Dorsolateral prefrontal cortex (tissue), 120 donors: ENCODE measurements at regions of chr19 and their contacts with region 1.

Region 1: GRCh38 chr19:12766051-12766521 is 9.3 kb downstream of the HOOK2 start:
- DNase-seq: peak in 9 of 10 donors; percentile 51 to 89 (median 71)
- H3K4me3 ChIP-seq: peak overlapping the region in 50 of 59 donors; percentile 4 to 71 (median 51)
- H3K27ac ChIP-seq: peak overlapping the region in 28 of 59 donors; percentile 20 to 81 (median 54)
- H3K27me3 ChIP-seq: no peaks in the 10 kb centered on the region
- CTCF ChIP-seq: peak in 47 of 56 donors; percentile 65 to 99 (median 80)

Region 2: GRCh38 chr19:12796146-12797071 is 30.3 kb after region 1 on chr19:
- intact Hi-C with region 1: loop called (anchors 5 kb)
- DNase-seq: peak in 9 of 10 donors; percentile 67 to 86 (median 78)
- H3K4me3 ChIP-seq: peak overlapping the region in 25 of 59 donors; percentile 1 to 46 (median 26)
- H3K27ac ChIP-seq: peak overlapping the region in 50 of 59 donors; percentile 8 to 80 (median 52)
- H3K27me3 ChIP-seq: no peaks in the 10 kb centered on the region
- CTCF ChIP-seq: peak; percentile 80 to 99 (median 96)

Region 3: DNA sequence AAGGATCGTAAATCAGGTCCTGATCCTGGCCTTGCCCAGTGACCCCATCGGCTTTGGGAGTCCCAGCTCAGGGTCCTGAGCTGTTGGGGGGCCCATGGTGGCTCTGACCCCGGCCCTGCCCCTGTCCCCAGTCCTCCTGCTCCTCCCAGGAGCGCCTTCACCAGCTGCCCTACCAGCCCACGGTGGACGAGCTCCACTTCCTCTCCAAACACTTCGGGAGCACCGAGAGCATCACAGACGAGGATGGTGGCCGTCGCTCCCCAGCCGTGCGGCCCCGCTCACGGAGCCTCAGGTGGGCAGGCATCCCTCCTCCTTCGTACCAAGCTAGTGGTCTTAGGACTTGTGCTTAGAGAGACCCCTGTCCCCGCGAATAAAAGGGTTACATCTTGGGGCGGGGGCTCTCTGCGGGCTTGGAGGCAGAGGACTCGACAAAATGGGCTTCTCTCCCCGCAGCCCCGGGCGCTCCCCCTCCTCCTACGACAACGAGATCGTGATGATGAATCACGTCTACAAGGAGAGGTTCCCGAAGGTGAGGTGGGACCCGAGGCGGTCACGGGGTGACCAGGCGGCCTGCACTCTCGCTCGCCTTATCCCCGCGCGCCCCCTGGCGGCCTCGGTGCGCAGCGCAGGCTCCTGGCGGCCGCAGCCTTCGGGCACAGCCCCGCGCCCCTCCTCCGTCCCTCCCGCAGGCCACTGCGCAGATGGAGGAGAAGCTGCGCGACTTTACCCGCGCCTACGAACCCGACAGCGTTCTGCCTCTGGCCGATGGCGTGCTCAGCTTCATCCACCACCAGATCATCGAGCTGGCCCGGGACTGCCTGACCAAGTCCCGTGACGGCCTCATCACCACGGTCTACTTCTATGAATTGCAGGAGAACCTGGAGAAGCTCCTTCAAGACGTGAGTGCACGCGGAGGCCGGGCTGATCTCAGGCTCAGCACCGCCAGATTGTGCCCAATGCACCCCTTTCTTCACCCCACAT is 81.4 kb after region 1 on chr19:
- intact Hi-C with region 1: loop called (anchors 5 kb)
- DNase-seq: peak; percentile 73 to 91 (median 84)
- H3K4me3 ChIP-seq: peak overlapping the region in 57 of 59 donors; percentile 9 to 62 (median 42)
- H3K27ac ChIP-seq: peak overlapping the region in 38 of 59 donors; percentile 3 to 81 (median 56)
- H3K27me3 ChIP-seq: peaks cover 0 to 10% (median 0%) of the 10 kb centered on the region in 45 donors
- CTCF ChIP-seq: peak; percentile 93 to 100 (median 99)